Mammary epithelial cell (primary cell): ENCODE measurements at regions of chr2 and their contacts with region 1.

Region 1: GRCh38 chr2:206159346-206160124 is at the starts of genes EEF1B2 and NDUFS1:
- DNase-seq: peak; percentile 97
- H3K4me3 ChIP-seq: peak within 1 kb of the TSS; percentile 84 to 95 (median 86)
- H3K27ac ChIP-seq: peak within 1 kb of the TSS; percentile 77
- H3K4me1 ChIP-seq: peaks cover 31% of the 10 kb centered on the region
- H3K27me3 ChIP-seq: no peaks in the 10 kb centered on the region
- CTCF ChIP-seq: no peak
- total RNA-seq, gene EEF1B2: 390 to 583 TPM
- total RNA-seq, gene NDUFS1: 74.6 to 80.9 TPM

Region 2: GRCh38 chr2:206085742-206086445 is 73.6 kb before region 1 on chr2 and contains the start of gene INO80D:
- CTCF ChIA-PET with region 1: interaction called, 3 read pairs
- dilution Hi-C with region 1: no loop called
- in situ Hi-C with region 1: no loop called
- intact Hi-C with region 1: loop called (anchors 2 kb)
- DNase-seq: peak; percentile 81
- H3K4me3 ChIP-seq: peak within 1 kb of the TSS; percentile 77 to 80 (median 77)
- H3K27ac ChIP-seq: peak within 1 kb of the TSS; percentile 84
- H3K4me1 ChIP-seq: peaks cover 5% of the 10 kb centered on the region
- H3K27me3 ChIP-seq: no peaks in the 10 kb centered on the region
- CTCF ChIP-seq: peak; percentile 34 to 67
- total RNA-seq, gene INO80D: 12.7 to 17.7 TPM

Region 3: GRCh38 chr2:206212673-206213513 is 53.4 kb after region 1 on chr2:
- CTCF ChIA-PET with region 1: no interaction called
- dilution Hi-C with region 1: no loop called
- in situ Hi-C with region 1: no loop called
- intact Hi-C with region 1: loop called (anchors 5 kb)
- DNase-seq: peak; percentile 43
- H3K4me3 ChIP-seq: peak overlapping the region; percentile 21 to 32 (median 24)
- H3K27ac ChIP-seq: peak overlapping the region; percentile 28
- H3K4me1 ChIP-seq: peaks cover 30% of the 10 kb centered on the region
- H3K27me3 ChIP-seq: no peaks in the 10 kb centered on the region
- CTCF ChIP-seq: no peak

Region 4: GRCh38 chr2:206230060-206230762 is 70.7 kb after region 1 on chr2:
- CTCF ChIA-PET with region 1: no interaction called
- dilution Hi-C with region 1: no loop called
- in situ Hi-C with region 1: no loop called
- intact Hi-C with region 1: loop called (anchors 1 kb)
- DNase-seq: peak; percentile 82
- H3K4me3 ChIP-seq: no peak overlapping the region
- H3K27ac ChIP-seq: no peak overlapping the region
- H3K4me1 ChIP-seq: peaks cover 10% of the 10 kb centered on the region
- H3K27me3 ChIP-seq: no peaks in the 10 kb centered on the region
- CTCF ChIP-seq: peak; percentile 26 to 38

Region 5: GRCh38 chr2:206260188-206261012 is 100.9 kb after region 1 on chr2:
- CTCF ChIA-PET with region 1: no interaction called
- dilution Hi-C with region 1: no loop called
- in situ Hi-C with region 1: loop called in 1 of 2 experiments (anchors 10 kb)
- intact Hi-C with region 1: loop called (anchors 1 kb)
- DNase-seq: peak; percentile 39
- H3K4me3 ChIP-seq: no peak overlapping the region
- H3K27ac ChIP-seq: no peak overlapping the region
- H3K4me1 ChIP-seq: no peaks in the 10 kb centered on the region
- H3K27me3 ChIP-seq: peaks cover 42% of the 10 kb centered on the region
- CTCF ChIP-seq: peak; percentile 67 to 68

Region 6: GRCh38 chr2:207103132-207103531 is 943.6 kb after region 1 on chr2:
- CTCF ChIA-PET with region 1: no interaction called
- dilution Hi-C with region 1: no loop called
- in situ Hi-C with region 1: no loop called
- intact Hi-C with region 1: loop called (anchors 5 kb)
- DNase-seq: no peak
- H3K4me3 ChIP-seq: no peak overlapping the region
- H3K27ac ChIP-seq: no peak overlapping the region
- H3K4me1 ChIP-seq: no peaks in the 10 kb centered on the region
- H3K27me3 ChIP-seq: no peaks in the 10 kb centered on the region
- CTCF ChIP-seq: no peak